Activated CD4-positive, alpha-beta memory T cell treated with anti-CD3 and anti-CD28 coated beads for 36 hours (primary cell): ENCODE measurements at regions of chr21 and their contacts with region 1.

Region 1: GRCh38 chr21:33360881-33361602 is 36.3 kb downstream of the IFNAR1 start:
- DNase-seq: peak; percentile 94
- H3K4me3 Mint-ChIP-seq: peak overlapping the region; percentile 70
- H3K27ac Mint-ChIP-seq: peak overlapping the region; percentile 75
- H3K4me1 Mint-ChIP-seq: peaks cover 13% of the 10 kb centered on the region
- H3K27me3 Mint-ChIP-seq: no peaks in the 10 kb centered on the region

Region 2: GRCh38 chr21:33199516-33200217 is 161.4 kb before region 1 on chr21:
- CTCF ChIA-PET with region 1: interaction called, 69 read pairs
- POLR2A ChIA-PET with region 1: interaction called, 5 read pairs
- intact Hi-C with region 1: loop called (anchors 1 kb)
- DNase-seq: peak; percentile 85
- H3K4me3 Mint-ChIP-seq: no peak overlapping the region
- H3K27ac Mint-ChIP-seq: peak overlapping the region; percentile 39
- H3K4me1 Mint-ChIP-seq: peaks cover 24% of the 10 kb centered on the region
- H3K27me3 Mint-ChIP-seq: no peaks in the 10 kb centered on the region

Region 3: GRCh38 chr21:33324291-33325221 is 36.5 kb before region 1 on chr21 and contains the start of gene IFNAR1:
- CTCF ChIA-PET with region 1: interaction called, 35 read pairs
- POLR2A ChIA-PET with region 1: interaction called, 9 read pairs
- intact Hi-C with region 1: loop called (anchors 5 kb)
- DNase-seq: peak; percentile 99
- H3K4me3 Mint-ChIP-seq: no peak within 1 kb of the TSS
- H3K27ac Mint-ChIP-seq: no peak within 1 kb of the TSS
- H3K4me1 Mint-ChIP-seq: peaks cover 26% of the 10 kb centered on the region
- H3K27me3 Mint-ChIP-seq: no peaks in the 10 kb centered on the region
- total RNA-seq, gene IFNAR1: 28.0 to 32.0 TPM

Region 4: DNA sequence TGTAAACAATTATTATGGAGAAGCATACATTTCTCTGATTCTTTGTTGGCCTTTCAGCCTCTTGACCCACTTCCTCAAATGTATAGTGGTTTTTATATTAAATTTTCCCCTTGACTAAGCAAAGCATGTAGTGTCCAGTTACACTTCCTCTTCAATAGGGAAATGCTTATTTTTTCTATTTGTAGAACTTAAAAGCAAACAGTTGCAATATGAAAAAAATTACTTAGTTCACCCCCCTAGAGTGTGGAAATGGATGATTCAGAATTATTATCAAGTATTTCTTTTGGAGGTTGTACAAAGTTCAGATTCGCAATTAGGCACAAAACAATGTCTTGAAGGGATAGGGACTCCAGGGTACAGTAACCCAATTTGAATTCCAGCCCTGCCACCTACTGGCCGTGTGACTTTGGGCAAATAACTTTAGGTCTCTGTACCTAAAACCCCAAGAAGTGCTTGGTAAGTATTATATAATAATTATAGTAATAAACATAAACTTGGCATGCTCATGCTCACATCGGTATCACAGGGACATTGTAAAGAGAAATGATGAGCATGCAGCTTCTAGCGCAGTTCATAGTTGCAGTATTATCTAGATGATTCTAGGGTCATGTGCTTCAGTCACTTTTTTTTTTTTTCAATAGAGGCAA is 13.5 kb after region 1 on chr21:
- CTCF ChIA-PET with region 1: interaction called, 24 read pairs
- POLR2A ChIA-PET with region 1: interaction called, 10 read pairs
- intact Hi-C with region 1: loop called (anchors 1 kb)
- DNase-seq: peak; percentile 73
- H3K4me3 Mint-ChIP-seq: no peak overlapping the region
- H3K27ac Mint-ChIP-seq: no peak overlapping the region
- H3K4me1 Mint-ChIP-seq: peaks cover 12% of the 10 kb centered on the region
- H3K27me3 Mint-ChIP-seq: peaks cover 6% of the 10 kb centered on the region

Region 5: DNA sequence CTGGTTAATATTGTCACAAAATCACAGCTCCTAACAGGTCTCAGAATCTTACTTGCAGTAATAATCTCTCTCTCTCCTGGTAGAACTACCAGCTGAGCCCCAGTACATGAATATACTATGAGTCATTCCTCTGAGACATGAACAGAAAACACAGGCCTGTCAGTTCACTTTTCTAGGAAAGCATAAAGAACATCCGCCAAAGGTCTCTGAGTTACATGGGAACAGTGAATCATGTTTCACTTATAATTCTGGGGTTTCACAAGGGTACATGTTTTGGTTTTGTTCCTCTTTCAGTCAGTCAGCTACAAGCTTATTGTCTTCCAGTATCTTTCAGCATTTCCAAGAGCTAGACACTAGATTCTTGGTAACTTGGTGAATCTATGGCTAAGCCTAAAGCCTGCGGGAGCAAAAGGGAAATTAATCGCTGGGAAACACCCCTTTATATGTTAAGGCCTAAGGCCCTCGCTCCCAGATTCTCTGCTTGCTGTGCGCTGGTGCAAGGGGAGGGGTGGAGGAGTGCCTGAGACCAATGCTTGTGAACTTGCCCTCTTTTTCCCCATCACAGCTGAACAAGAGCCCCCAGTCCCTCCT is 73.8 kb after region 1 on chr21:
- CTCF ChIA-PET with region 1: interaction called, 29 read pairs
- POLR2A ChIA-PET with region 1: no interaction called
- intact Hi-C with region 1: loop called (anchors 1 kb)
- DNase-seq: peak; percentile 44
- H3K4me3 Mint-ChIP-seq: peak overlapping the region; percentile 28
- H3K27ac Mint-ChIP-seq: peak overlapping the region; percentile 76
- H3K4me1 Mint-ChIP-seq: peaks cover 27% of the 10 kb centered on the region
- H3K27me3 Mint-ChIP-seq: no peaks in the 10 kb centered on the region

Region 6: DNA sequence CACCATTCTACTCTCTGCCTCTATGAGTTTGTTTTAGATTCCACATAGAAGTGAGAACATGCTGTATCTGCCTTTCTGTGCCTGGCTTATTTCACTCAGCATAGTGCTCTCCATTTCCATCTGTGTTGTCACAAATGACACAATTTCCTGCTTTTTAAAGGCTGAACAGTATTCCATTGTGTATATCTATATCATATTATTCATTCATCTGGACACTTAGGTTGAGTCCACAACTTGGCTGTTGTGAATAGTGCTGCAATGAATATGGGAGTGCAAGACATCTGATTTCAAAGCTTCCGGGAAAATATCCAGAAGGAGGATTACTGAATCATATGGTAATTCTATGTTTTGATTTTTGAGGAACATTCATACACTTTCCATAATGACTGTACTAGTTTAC is 247.5 kb after region 1 on chr21:
- CTCF ChIA-PET with region 1: interaction called, 3 read pairs
- POLR2A ChIA-PET with region 1: no interaction called
- intact Hi-C with region 1: loop called (anchors 10 kb)
- DNase-seq: no peak
- H3K4me3 Mint-ChIP-seq: no peak overlapping the region
- H3K27ac Mint-ChIP-seq: no peak overlapping the region
- H3K4me1 Mint-ChIP-seq: no peaks in the 10 kb centered on the region
- H3K27me3 Mint-ChIP-seq: no peaks in the 10 kb centered on the region